Dendritic cell treated with granulocyte-macrophage colony-stimulating factor and Interleukin-4, amounts not matched to agents 40 ng/mL and 50 ng/mL, for 4 days (primary cell): ENCODE measurements at regions of chr9 and their contacts with region 1.

Region 1: GRCh38 chr9:72364679-72365524 is at the start of gene ZFAND5:
- H3K4me3 Mint-ChIP-seq: peak within 1 kb of the TSS; percentile 76
- H3K27ac Mint-ChIP-seq: peak within 1 kb of the TSS; percentile 97
- H3K4me1 Mint-ChIP-seq: peaks cover 16% of the 10 kb centered on the region
- H3K27me3 Mint-ChIP-seq: no peaks in the 10 kb centered on the region

Region 2: DNA sequence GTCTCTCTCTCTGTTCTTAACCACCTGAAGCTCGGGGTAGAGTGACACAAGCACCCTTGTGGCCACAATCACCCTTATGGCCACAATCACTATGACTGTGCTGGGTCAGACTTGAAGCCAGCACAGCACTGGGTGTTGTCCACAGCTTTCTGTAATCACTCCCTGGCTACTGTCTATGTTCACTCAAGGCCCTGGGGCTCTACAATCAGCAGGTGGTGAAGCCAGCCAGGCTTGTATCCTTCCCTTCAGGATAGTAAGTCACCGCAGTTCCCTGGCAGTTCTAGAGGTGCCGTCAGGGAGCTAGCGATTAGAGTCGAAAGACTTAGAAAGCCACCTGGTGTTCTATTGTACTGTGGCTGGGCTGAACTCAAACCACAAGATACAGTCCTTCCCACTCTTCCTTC is 171.4 kb before region 1 on chr9:
- intact Hi-C with region 1: no loop called
- H3K4me3 Mint-ChIP-seq: no peak overlapping the region
- H3K27ac Mint-ChIP-seq: no peak overlapping the region
- H3K4me1 Mint-ChIP-seq: peaks cover 12% of the 10 kb centered on the region
- H3K27me3 Mint-ChIP-seq: peaks cover 4% of the 10 kb centered on the region

Region 3: DNA sequence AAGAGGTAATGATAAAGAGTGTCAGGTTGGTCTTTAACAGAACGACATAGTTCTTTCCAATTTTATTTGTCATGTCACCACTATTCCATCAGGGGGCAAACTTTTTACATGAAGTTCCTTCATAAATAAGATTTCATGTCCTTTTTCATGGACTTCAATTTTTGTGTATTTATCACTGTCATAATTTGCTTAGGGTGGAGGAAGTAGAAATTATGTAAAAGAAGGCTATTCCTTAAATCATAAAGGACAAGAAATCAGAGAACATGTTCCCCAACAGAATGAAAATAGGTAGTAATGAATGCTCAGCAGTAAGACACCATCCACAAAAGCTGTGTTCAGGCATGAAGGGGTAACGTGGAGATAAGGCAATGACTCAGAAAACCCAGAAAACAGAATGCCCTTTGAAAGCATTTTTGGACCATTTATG is 72.6 kb before region 1 on chr9:
- intact Hi-C with region 1: loop called (anchors 2 kb)
- H3K4me3 Mint-ChIP-seq: peak overlapping the region; percentile 5
- H3K27ac Mint-ChIP-seq: peak overlapping the region; percentile 98
- H3K4me1 Mint-ChIP-seq: peaks cover 57% of the 10 kb centered on the region
- H3K27me3 Mint-ChIP-seq: no peaks in the 10 kb centered on the region

Region 4: DNA sequence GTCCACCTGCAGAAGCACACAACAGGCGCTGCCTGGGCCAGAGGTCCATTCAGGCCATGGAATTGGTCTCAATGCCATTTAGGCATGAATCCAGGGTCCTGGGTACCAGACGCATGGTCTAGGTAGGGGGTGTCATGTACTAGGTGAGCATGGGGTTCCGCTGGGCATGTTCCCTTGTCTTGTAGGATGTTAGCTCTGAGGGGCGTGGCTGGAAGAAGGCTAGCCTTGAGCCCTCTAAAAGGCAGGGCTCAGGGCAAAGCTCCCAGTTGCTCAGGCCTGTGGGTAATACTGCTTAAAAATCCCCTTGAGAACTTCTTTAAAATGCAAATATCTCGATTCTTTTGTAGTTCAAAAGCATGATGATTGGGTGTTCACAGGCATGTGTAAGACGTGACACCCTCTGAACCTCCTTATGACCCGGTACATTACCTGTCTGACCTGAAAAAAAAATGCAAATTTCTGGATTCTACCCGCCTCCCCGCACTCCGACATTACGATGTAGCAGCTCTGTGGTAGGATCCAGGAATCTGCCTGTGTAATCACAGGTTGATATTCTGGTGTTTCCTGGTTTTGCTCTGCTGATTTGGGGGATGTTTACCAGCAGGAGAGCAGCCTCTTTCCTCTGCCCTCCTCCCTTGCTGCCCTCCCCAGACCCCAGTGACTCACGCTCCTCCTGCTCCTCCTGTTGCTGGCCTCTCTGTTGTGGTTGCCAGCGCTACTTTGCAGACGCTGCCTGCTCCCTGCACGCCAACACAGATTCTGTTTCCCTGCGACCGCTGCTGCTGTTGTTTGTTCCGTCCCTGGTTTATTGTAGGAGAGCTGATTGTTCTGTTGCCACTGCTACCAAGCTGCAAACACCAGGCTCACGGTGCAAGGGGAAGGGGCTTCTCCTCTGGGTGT is 162.2 kb after region 1 on chr9:
- intact Hi-C with region 1: loop called (anchors 5 kb)
- H3K4me3 Mint-ChIP-seq: peak overlapping the region; percentile 77
- H3K27ac Mint-ChIP-seq: peak overlapping the region; percentile 99
- H3K4me1 Mint-ChIP-seq: peaks cover 53% of the 10 kb centered on the region
- H3K27me3 Mint-ChIP-seq: no peaks in the 10 kb centered on the region

Region 5: DNA sequence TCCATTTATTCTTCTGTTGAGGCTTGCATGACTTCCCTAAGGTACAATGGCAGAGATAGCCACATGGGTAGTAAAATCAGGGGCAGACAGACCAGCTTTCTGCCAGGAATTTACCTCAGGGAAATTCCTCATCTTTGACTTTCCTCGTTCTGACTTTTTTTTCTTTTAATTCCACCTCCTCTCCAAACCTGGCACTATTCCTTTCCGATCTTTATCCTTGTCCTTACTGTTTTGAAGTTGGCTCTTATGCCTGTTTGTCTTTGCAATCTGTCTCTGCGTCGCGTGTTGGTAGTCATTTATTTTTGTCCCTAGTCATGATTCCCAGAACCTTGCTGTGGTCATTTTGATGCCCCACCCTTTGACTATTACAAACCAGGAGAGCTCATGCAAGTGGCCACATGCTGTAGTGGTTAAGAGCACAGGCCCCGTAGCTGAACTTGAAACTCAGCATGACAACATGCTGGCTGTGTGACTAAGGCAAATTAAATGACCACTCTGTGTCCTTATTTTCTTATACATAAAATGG is 175.5 kb after region 1 on chr9:
- intact Hi-C with region 1: loop called (anchors 5 kb)
- H3K4me3 Mint-ChIP-seq: peak overlapping the region; percentile 21
- H3K27ac Mint-ChIP-seq: peak overlapping the region; percentile 81
- H3K4me1 Mint-ChIP-seq: peaks cover 48% of the 10 kb centered on the region
- H3K27me3 Mint-ChIP-seq: no peaks in the 10 kb centered on the region